ENCODE measurements at regions of chrX and their contacts with region 1.

Region 1: GRCh38 chrX:79270401-79270800 is 96.7 kb downstream of the ITM2A start:
- DNase-seq: peak; percentile 29 to 76 (median 68)
- ATAC-seq: peak; percentile 98
- H3K4me3 ChIP-seq: no peak overlapping the region
- H3K4me3 Mint-ChIP-seq: peak overlapping the region; percentile 17 to 77 (median 56)
- H3K27ac ChIP-seq: peak overlapping the region; percentile 61
- H3K27ac Mint-ChIP-seq: peak overlapping the region in 8 of 9 donors; percentile 84 to 94 (median 90)
- H3K4me1 ChIP-seq: peaks cover 24 to 34% of the 10 kb centered on the region in 2 donors
- H3K4me1 Mint-ChIP-seq: peaks cover 13 to 68% (median 45%) of the 10 kb centered on the region in 7 donors
- H3K27me3 ChIP-seq: no peaks in the 10 kb centered on the region
- H3K27me3 Mint-ChIP-seq: no peaks in the 10 kb centered on the region

Region 2: GRCh38 chrX:78886550-78886949 is 383.9 kb before region 1 on chrX:
- CTCF ChIA-PET with region 1: no interaction called
- POLR2A ChIA-PET with region 1: no interaction called
- intact Hi-C with region 1: loop called (anchors 1 to 2 kb)
- DNase-seq: peak in 6 of 9 donors; percentile 2 to 33 (median 18)
- ATAC-seq: peak; percentile 67
- H3K4me3 ChIP-seq: no peak overlapping the region
- H3K4me3 Mint-ChIP-seq: peak overlapping the region in 3 of 10 donors; percentile 0 to 46 (median 38)
- H3K27ac ChIP-seq: no peak overlapping the region
- H3K27ac Mint-ChIP-seq: peak overlapping the region in 5 of 9 donors; percentile 6 to 51 (median 13)
- H3K4me1 ChIP-seq: peaks cover 0 to 4% of the 10 kb centered on the region in 2 donors
- H3K4me1 Mint-ChIP-seq: peaks cover 4 to 11% (median 9%) of the 10 kb centered on the region in 7 donors
- H3K27me3 ChIP-seq: no peaks in the 10 kb centered on the region
- H3K27me3 Mint-ChIP-seq: no peaks in the 10 kb centered on the region

Region 3: GRCh38 chrX:79036157-79036880 is 234.1 kb before region 1 on chrX:
- CTCF ChIA-PET with region 1: interaction called, 3 read pairs
- POLR2A ChIA-PET with region 1: no interaction called
- intact Hi-C with region 1: loop called in 1 of 2 experiments (anchors 1 kb)
- DNase-seq: peak in 2 of 9 donors; percentile 0 to 5
- ATAC-seq: no peak
- H3K4me3 ChIP-seq: no peak overlapping the region
- H3K4me3 Mint-ChIP-seq: peak overlapping the region in 4 of 10 donors; percentile 8 to 46 (median 23)
- H3K27ac ChIP-seq: no peak overlapping the region
- H3K27ac Mint-ChIP-seq: peak overlapping the region in 3 of 9 donors; percentile 23 to 63 (median 32)
- H3K4me1 ChIP-seq: no peaks in the 10 kb centered on the region
- H3K4me1 Mint-ChIP-seq: peaks cover 0 to 38% (median 26%) of the 10 kb centered on the region in 7 donors
- H3K27me3 ChIP-seq: no peaks in the 10 kb centered on the region
- H3K27me3 Mint-ChIP-seq: no peaks in the 10 kb centered on the region